ENCODE measurements at regions of chr1 and their contacts with region 1.

Region 1: DNA sequence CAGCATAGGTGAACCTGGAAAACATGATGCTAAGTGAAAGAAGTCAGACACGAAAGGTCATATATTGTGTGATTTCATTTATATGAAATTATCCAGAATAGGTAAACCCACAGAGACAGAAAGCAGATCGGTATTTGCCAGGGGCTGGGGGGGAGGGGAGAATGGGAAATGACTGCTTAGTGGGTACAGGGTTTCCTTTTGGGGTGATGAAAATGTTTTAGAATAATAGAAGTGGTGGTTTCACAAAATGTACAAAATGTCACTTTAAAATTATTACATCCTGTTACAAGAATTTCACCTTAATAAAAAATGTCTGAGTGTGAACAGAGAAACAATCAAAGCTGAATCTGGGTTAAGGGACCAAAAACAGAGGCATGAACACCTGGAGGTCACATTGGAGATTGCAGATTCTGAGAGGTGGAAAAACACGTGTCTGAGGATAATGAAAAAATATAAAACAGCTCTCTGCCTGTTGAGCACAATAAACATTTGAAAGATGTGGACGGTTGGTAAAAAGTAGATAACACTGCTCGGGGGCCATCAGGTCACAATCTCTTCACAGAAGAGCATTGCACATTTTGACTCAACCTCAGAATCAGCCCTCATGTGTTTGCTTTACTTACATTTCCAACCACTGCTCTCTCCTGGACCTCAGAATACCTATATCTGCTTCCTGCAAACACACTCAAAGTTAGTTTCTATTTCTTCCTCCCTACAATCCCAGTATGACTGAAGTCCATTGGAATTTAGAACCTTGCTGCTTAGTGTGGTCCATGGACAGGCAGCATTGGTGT is 3.2 kb downstream of the SLAMF6 start:
- DNase-seq: peak; percentile 83
- H3K4me3 ChIP-seq: peak overlapping the region; percentile 83
- H3K27ac ChIP-seq: peak overlapping the region; percentile 98
- H3K4me1 ChIP-seq: peaks cover 71% of the 10 kb centered on the region
- CTCF ChIP-seq: peak; percentile 72

Region 2: GRCh38 chr1:160032165-160032820 is 487.5 kb before region 1 on chr1:
- CTCF ChIA-PET with region 1: no interaction called
- POLR2A ChIA-PET with region 1: no interaction called
- intact Hi-C with region 1: no loop called
- DNase-seq: peak; percentile 11
- H3K4me3 ChIP-seq: peak overlapping the region; percentile 74
- H3K27ac ChIP-seq: no peak overlapping the region
- H3K4me1 ChIP-seq: peaks cover 24% of the 10 kb centered on the region
- CTCF ChIP-seq: no peak

Region 3: DNA sequence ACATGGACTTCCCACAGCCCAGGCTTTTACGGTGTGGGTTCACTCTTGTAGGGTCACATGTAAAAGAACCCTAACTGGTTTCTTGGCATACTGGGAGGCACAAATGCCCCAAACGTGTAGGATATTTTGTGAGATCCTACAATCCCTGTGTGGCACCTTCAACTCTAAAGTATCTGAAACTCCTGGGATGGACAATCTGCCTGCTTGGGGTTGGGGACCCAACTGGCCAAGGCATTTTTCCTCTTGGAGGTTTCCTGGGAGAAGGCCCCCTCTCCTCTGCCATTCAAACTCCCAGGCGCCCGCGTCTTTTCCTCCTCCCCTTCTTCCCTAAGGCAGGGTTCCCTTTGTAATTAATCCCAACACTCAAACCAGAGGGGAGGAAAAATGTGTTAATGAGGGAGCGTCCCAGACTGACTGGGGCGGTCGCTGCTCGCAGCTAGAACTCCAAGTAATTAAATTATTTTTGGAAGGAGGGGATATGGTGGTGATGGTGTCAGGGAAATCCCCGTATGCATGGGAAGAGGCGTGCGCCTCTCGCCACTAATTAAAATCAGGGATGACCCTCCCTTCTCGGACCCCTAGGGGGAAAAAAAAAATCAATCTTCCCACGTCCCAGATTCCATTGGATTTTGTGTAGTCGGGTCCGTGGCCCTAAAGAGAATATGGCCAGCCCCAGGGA is 120.2 kb before region 1 on chr1:
- CTCF ChIA-PET with region 1: no interaction called
- POLR2A ChIA-PET with region 1: no interaction called
- intact Hi-C with region 1: no loop called
- DNase-seq: no peak
- H3K4me3 ChIP-seq: peak overlapping the region; percentile 58
- H3K27ac ChIP-seq: no peak overlapping the region
- H3K4me1 ChIP-seq: peaks cover 16% of the 10 kb centered on the region
- CTCF ChIP-seq: no peak

Region 4: DNA sequence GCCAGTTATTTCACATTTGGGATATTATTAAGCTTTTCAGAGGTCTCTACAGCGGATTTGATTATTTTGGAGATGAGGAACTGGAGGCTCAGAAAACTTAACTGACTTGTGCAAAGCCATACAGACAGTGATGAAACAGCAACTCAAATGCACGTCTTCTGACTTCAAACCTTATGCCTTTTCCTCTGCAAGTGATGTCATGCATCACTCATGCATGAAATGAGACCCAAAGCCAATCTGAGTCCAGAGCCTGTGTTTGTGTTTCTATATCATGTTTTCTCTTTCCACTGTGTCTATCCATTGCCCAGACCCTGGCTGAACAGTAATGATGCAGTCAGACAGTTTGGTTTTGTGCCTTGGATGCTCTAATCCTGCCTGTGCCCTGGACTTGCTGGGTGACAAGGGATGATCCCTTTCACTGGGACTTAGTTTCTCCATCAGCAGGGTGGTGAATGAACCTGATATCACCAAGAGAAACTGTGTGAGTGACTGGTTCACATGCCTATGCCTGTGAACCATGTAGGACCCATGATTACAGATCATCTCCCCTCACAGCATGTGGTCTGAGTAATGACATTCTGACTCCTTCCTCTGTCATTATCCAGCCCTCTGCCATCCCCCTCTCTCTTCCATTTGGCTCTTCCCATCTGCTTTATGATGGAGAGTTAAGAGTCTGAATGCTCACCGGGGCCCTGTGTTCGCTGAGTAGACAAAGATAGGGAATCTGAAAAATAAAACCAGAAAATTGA is 30.2 kb before region 1 on chr1:
- CTCF ChIA-PET with region 1: no interaction called
- POLR2A ChIA-PET with region 1: interaction called, 22 read pairs
- intact Hi-C with region 1: loop called (anchors 1 kb)
- DNase-seq: peak; percentile 52
- H3K4me3 ChIP-seq: peak overlapping the region; percentile 22
- H3K27ac ChIP-seq: peak overlapping the region; percentile 97
- H3K4me1 ChIP-seq: peaks cover 75% of the 10 kb centered on the region
- CTCF ChIP-seq: no peak

Region 5: GRCh38 chr1:160550572-160551034 is 30.8 kb after region 1 on chr1:
- CTCF ChIA-PET with region 1: no interaction called
- POLR2A ChIA-PET with region 1: interaction called, 6 read pairs
- intact Hi-C with region 1: loop called (anchors 2 kb)
- DNase-seq: peak; percentile 67
- H3K4me3 ChIP-seq: no peak overlapping the region
- H3K27ac ChIP-seq: peak overlapping the region; percentile 86
- H3K4me1 ChIP-seq: peaks cover 74% of the 10 kb centered on the region
- CTCF ChIP-seq: peak; percentile 82

Region 6: DNA sequence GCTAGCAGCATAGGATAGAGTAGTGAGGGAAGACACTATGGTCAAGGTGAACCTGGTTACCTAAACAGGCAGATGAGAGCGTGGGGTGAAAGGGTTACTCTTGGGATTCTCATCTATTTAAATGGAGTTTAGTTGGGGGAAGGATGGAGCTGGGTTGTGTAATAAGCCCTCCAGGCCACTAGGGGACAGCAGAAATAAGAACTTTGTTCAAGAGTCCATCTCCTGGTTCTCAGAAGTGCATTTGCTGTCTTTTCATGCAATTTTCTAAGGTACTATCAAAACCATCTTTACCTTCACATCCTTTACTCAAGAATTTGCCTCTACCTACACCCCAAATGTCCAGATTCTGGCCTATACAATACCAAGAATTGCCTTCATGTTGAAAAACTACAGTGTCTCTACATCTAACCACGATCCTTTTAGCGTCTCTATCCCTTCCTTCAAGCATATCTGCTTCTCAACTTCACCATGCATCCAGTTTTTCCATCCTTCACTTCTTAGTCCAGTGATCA is 99.0 kb after region 1 on chr1:
- CTCF ChIA-PET with region 1: no interaction called
- POLR2A ChIA-PET with region 1: interaction called, 16 read pairs
- intact Hi-C with region 1: no loop called
- DNase-seq: peak; percentile 59
- H3K4me3 ChIP-seq: no peak overlapping the region
- H3K27ac ChIP-seq: no peak overlapping the region
- H3K4me1 ChIP-seq: peaks cover 72% of the 10 kb centered on the region
- CTCF ChIP-seq: peak; percentile 90